GM12878 (cell line): ENCODE measurements at regions of chr6 and their contacts with region 1.

Region 1: GRCh38 chr6:125749173-125749864 is at the start of gene HEY2:
- DNase-seq: peak; percentile 33
- ATAC-seq: peak; percentile 96
- H3K4me3 ChIP-seq: peak within 1 kb of the TSS; percentile 71
- H3K27ac ChIP-seq: no peak within 1 kb of the TSS
- H3K4me1 ChIP-seq: peaks cover 9% of the 10 kb centered on the region
- H3K27me3 ChIP-seq: peaks cover 5 to 6% of the 10 kb centered on the region in 2 experiments; a peak in 3 of 4 replicates
- CTCF ChIP-seq: no peak
- EP300 ChIP-seq: no peak
- POLR2A ChIP-seq: peak; percentile 56; the same call in 1 of the 2 replicates
- RAD21 ChIP-seq: no peak
- polyA plus RNA-seq, gene HEY2: not detected

Region 2: GRCh38 chr6:124881898-124882579 is 867.3 kb before region 1 on chr6:
- CTCF ChIA-PET with region 1: no interaction called
- POLR2A ChIA-PET with region 1: no interaction called
- RAD21 ChIA-PET with region 1: no interaction called
- SMC1A ChIA-PET with region 1: no interaction called
- in situ Hi-C with region 1: loop called (anchors 25 kb)
- intact Hi-C with region 1: no loop called
- DNase-seq: no peak
- ATAC-seq: no peak
- H3K4me3 ChIP-seq: no peak overlapping the region
- H3K27ac ChIP-seq: no peak overlapping the region
- H3K4me1 ChIP-seq: no peaks in the 10 kb centered on the region
- H3K27me3 ChIP-seq: no peaks in the 10 kb centered on the region
- CTCF ChIP-seq: no peak
- EP300 ChIP-seq: no peak
- POLR2A ChIP-seq: no peak
- RAD21 ChIP-seq: no peak

Region 3: GRCh38 chr6:125512621-125513020 is 236.7 kb before region 1 on chr6:
- CTCF ChIA-PET with region 1: interaction called, 5 read pairs
- POLR2A ChIA-PET with region 1: no interaction called
- RAD21 ChIA-PET with region 1: interaction called, 3 read pairs
- SMC1A ChIA-PET with region 1: interaction called, 3 read pairs
- in situ Hi-C with region 1: no loop called
- intact Hi-C with region 1: loop called (anchors 1 kb)
- DNase-seq: no peak
- ATAC-seq: peak; percentile 81
- H3K4me3 ChIP-seq: no peak overlapping the region
- H3K27ac ChIP-seq: no peak overlapping the region
- H3K4me1 ChIP-seq: no peaks in the 10 kb centered on the region
- H3K27me3 ChIP-seq: 0 out of 4 replicates have a peak, but pooled peaks cover 0 to 4% of the 10 kb centered on the region in 2 experiments
- CTCF ChIP-seq: peak; percentile 55 to 63 (median 60)
- EP300 ChIP-seq: no peak
- POLR2A ChIP-seq: no peak
- RAD21 ChIP-seq: peak; percentile 77

Region 4: DNA sequence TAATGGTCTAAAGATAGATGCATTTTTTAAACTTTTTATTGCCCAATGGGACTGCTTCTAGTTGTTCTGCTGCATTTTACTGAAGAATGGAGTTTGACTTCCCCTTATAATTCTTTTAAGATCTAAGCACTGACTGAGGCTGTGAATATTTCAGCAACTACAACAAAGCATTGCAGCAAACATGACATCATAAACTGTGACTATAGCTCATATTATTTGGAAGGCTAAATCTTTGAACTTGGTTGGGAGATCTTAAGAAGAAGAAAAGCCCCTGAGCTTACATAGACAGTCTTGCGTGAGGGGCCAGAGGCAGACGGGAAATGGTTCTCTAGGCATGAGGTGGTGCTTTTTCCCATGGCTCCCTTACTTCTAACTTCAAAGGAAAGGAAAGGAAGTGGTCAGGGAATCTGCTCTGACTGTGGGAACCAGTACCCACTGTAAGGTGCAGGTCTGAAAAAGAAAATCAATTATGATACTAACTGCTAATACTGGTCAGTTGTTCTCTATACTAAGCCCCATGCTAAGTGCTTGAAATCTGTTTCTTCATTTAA is 14.9 kb after region 1 on chr6:
- CTCF ChIA-PET with region 1: interaction called, 19 read pairs
- POLR2A ChIA-PET with region 1: no interaction called
- RAD21 ChIA-PET with region 1: interaction called, 5 read pairs
- SMC1A ChIA-PET with region 1: interaction called, 17 read pairs
- in situ Hi-C with region 1: no loop called
- intact Hi-C with region 1: no loop called
- DNase-seq: no peak
- ATAC-seq: no peak; the same call in 2 of the 3 replicates
- H3K4me3 ChIP-seq: no peak overlapping the region
- H3K27ac ChIP-seq: no peak overlapping the region
- H3K4me1 ChIP-seq: no peaks in the 10 kb centered on the region
- H3K27me3 ChIP-seq: no peaks in the 10 kb centered on the region
- CTCF ChIP-seq: no peak
- EP300 ChIP-seq: no peak
- POLR2A ChIP-seq: no peak
- RAD21 ChIP-seq: no peak

Region 5: DNA sequence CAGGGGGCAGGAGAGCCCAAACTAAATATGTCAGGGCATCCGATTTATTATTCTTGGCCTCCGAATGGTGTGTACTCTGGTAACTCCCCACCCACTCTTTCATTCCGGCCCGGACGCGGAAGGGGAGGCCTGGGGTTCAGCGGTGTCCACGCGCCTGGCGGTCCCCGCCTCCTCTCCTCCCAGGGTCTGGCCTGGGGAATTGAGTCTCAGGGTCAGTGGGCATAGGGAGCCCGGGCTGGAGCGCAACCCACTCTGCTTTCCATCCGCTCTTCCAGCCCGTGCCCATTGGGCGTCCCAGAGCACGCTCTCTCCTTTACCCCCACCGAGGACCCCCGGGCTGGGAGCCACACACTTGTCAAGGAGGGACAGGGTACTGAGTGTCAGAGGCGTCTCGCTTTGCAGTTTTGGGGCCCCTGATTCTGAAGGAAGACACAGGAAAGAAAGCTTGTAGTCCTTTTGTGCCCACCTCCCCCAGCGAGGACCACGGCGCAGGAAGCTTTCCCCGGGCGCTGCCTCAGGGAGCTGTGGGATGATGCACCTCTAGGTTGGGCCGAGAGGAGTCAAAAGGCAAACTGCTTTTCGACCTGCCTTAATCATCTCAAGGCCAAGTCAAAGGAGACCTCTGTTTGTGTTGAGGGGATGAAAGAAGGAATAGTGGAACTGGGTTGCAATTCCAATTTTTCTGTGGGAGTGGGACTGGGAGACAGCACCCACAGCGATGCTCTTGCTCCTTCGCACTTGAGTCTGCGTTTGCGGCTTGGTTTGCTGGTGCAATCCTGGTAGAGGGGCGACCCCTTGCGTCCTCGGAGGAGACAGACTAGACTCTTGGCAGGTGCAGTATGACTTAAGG is 1371.7 kb after region 1 on chr6:
- CTCF ChIA-PET with region 1: no interaction called
- POLR2A ChIA-PET with region 1: no interaction called
- RAD21 ChIA-PET with region 1: no interaction called
- SMC1A ChIA-PET with region 1: no interaction called
- in situ Hi-C with region 1: loop called (anchors 25 kb)
- intact Hi-C with region 1: no loop called
- DNase-seq: peak; percentile 24
- ATAC-seq: peak; percentile 90
- H3K4me3 ChIP-seq: no peak overlapping the region
- H3K27ac ChIP-seq: no peak overlapping the region
- H3K4me1 ChIP-seq: peaks cover 5% of the 10 kb centered on the region
- H3K27me3 ChIP-seq: peaks cover 9 to 24% of the 10 kb centered on the region in 2 experiments
- CTCF ChIP-seq: peak; percentile 81 to 96 (median 85)
- EP300 ChIP-seq: no peak
- POLR2A ChIP-seq: no peak
- RAD21 ChIP-seq: peak; percentile 97